Psoas muscle (tissue), 8 donors: ENCODE measurements at regions of chr4 and their contacts with region 1.

Region 1: GRCh38 chr4:75004755-75005668 is 72.1 kb downstream of the PARM1 start:
- DNase-seq: peak; percentile 67 to 88
- ATAC-seq: peak; percentile 98 to 100 (median 99)
- H3K4me3 ChIP-seq: no peak overlapping the region
- H3K27ac ChIP-seq: peak overlapping the region; percentile 82
- H3K4me1 ChIP-seq: peaks cover 27% of the 10 kb centered on the region
- H3K27me3 ChIP-seq: no peaks in the 10 kb centered on the region
- CTCF ChIP-seq: no peak

Region 2: DNA sequence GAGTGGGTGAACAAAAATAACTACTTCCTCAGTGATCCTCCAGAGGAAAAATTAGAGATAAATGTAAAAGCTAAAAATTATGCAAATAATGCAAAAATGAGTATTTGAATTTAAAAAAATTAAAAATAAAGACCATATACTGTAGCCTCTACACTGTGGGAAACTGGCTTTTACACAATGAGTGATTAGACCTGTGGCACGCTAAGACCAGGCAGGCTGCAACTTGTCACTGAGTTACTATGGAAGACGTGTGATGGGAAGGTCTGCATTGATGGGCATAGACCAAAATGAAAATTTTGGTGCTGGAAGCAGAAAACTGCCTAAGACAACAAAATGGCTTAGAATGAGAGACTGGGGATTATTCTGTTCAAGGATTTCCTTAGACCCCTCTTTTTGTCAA is 240.9 kb before region 1 on chr4:
- intact Hi-C with region 1: no loop called
- DNase-seq: no peak
- ATAC-seq: no peak
- H3K4me3 ChIP-seq: no peak overlapping the region
- H3K27ac ChIP-seq: no peak overlapping the region
- H3K4me1 ChIP-seq: no peaks in the 10 kb centered on the region
- H3K27me3 ChIP-seq: no peaks in the 10 kb centered on the region
- CTCF ChIP-seq: no peak

Region 3: GRCh38 chr4:74944328-74944793 is 60.7 kb before region 1 on chr4:
- intact Hi-C with region 1: loop called in 1 of 2 experiments (anchors 10 kb)
- DNase-seq: no peak
- ATAC-seq: no peak
- H3K4me3 ChIP-seq: no peak overlapping the region
- H3K27ac ChIP-seq: no peak overlapping the region
- H3K4me1 ChIP-seq: peaks cover 3% of the 10 kb centered on the region
- H3K27me3 ChIP-seq: no peaks in the 10 kb centered on the region
- CTCF ChIP-seq: no peak

Region 4: GRCh38 chr4:74958881-74959280 is 46.1 kb before region 1 on chr4:
- intact Hi-C with region 1: no loop called
- DNase-seq: no peak
- ATAC-seq: no peak
- H3K4me3 ChIP-seq: no peak overlapping the region
- H3K27ac ChIP-seq: no peak overlapping the region
- H3K4me1 ChIP-seq: peaks cover 15% of the 10 kb centered on the region
- H3K27me3 ChIP-seq: no peaks in the 10 kb centered on the region
- CTCF ChIP-seq: no peak

Region 5: DNA sequence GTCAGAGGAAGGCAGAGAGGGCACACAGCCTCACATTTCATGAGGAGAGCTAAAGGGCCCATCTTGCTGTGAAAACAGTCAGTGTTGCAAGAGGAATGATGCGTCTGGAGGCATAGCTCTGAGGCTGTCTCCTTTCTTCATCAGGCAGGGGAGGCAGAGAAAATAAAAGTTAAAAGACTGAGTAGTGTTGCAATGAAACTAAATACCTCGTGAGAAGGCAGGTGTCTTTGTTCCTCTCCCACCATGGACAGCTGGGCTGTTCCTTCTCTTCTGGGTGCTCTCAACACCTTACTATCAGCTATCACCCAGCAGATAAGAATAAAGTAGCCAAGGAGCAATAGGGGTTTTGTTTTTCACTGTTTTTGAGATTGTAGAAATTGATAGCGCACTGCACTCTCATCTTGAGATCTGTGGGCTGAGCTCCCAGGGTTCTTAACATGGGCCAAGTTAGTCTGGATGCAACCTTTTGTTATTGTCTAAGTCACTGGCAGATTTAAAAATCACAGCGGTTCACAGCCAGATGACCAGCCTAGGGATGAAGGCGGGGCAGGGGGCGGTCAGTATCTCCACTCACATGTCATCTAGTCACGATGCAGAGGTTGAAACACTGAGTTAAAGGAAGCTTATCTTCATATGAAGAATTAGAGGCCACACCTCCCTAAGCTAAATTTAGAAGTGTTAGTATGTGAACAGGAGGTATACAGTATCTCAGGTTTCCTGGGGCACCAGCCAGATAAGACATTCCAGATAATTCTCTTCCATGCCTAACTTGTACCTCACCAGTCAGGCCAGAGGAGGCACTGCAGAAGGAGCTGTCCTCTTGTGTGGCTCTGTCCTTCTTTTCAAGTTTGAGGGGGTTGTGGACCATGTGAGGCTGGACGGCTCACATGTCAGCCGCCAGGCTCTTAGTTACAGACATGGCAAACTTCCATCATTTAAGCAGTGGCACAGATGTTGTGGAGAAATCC is 35.2 kb before region 1 on chr4:
- intact Hi-C with region 1: loop called in 1 of 2 experiments (anchors 5 kb)
- DNase-seq: peak in 1 of 2 donors; percentile 69
- ATAC-seq: peak; percentile 89 to 96 (median 96)
- H3K4me3 ChIP-seq: peak overlapping the region; percentile 45
- H3K27ac ChIP-seq: peak overlapping the region; percentile 84
- H3K4me1 ChIP-seq: peaks cover 31% of the 10 kb centered on the region
- H3K27me3 ChIP-seq: no peaks in the 10 kb centered on the region
- CTCF ChIP-seq: peak; percentile 62

Region 6: GRCh38 chr4:75048208-75048879 is 43.3 kb after region 1 on chr4:
- intact Hi-C with region 1: no loop called
- DNase-seq: no peak
- ATAC-seq: no peak
- H3K4me3 ChIP-seq: no peak overlapping the region
- H3K27ac ChIP-seq: no peak overlapping the region
- H3K4me1 ChIP-seq: no peaks in the 10 kb centered on the region
- H3K27me3 ChIP-seq: no peaks in the 10 kb centered on the region
- CTCF ChIP-seq: no peak